Activated naive CD4-positive, alpha-beta T cell treated with anti-CD3 and anti-CD28 coated beads for 36 hours (primary cell): ENCODE measurements at regions of chr12 and their contacts with region 1.

Region 1: GRCh38 chr12:27014085-27014858 is at the start of gene TM7SF3:
- DNase-seq: peak; percentile 96
- H3K4me3 Mint-ChIP-seq: peak within 1 kb of the TSS; percentile 91
- H3K27ac Mint-ChIP-seq: peak within 1 kb of the TSS; percentile 88
- H3K4me1 Mint-ChIP-seq: peaks cover 45% of the 10 kb centered on the region
- H3K27me3 Mint-ChIP-seq: no peaks in the 10 kb centered on the region
- total RNA-seq, gene TM7SF3: 39.1 to 42.8 TPM

Region 2: GRCh38 chr12:25069224-25069623 is 1945.0 kb before region 1 on chr12:
- CTCF ChIA-PET with region 1: no interaction called
- intact Hi-C with region 1: no loop called
- DNase-seq: no peak
- H3K4me3 Mint-ChIP-seq: no peak overlapping the region
- H3K27ac Mint-ChIP-seq: no peak overlapping the region
- H3K4me1 Mint-ChIP-seq: peaks cover 27% of the 10 kb centered on the region
- H3K27me3 Mint-ChIP-seq: no peaks in the 10 kb centered on the region

Region 3: DNA sequence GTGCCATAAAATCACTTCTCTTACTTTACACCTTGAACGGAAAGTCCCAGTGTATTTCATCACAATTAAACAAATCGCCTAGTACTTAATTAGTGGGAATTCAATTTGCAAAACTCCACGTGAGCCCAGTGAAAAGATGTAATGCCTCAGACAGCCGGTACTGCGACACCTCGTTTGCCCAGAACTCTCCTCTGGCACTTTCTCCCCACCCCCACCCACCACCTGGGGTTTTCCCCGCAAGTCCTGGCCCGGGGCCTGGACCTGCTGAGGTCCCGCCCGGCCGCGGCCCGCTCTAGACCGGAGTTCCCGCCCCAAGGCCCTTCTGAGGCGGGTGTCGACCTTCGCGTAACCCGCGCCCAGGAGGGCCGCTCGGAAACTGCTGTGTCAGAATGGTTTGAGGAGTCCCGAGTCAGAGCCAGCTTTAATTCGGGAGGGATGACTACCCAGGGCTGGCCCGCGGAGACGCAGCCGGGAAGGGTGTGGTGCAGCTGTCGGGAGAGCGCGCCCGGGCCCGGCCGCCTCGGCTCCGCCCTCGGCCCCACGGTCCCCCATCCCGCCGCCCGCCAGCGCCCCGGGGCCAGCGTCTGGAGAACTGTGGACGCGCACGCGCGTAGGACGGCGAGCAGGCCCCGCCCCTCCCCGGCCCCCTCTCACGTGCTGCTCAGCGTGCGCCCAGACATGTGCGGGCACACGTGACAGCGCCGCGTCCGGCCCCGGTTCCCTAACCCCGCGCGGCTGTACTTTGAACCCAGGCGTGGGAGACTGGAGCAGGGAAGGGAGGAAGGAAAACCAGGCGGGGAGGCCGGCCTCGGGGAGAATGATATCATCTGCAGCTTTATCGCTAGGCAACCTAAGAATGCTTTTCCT is 900.2 kb before region 1 on chr12:
- CTCF ChIA-PET with region 1: interaction called, 4 read pairs
- intact Hi-C with region 1: loop called (anchors 2 kb)
- DNase-seq: peak; percentile 82
- H3K4me3 Mint-ChIP-seq: peak overlapping the region; percentile 68
- H3K27ac Mint-ChIP-seq: peak overlapping the region; percentile 22
- H3K4me1 Mint-ChIP-seq: peaks cover 6% of the 10 kb centered on the region
- H3K27me3 Mint-ChIP-seq: peaks cover 35% of the 10 kb centered on the region

Region 4: DNA sequence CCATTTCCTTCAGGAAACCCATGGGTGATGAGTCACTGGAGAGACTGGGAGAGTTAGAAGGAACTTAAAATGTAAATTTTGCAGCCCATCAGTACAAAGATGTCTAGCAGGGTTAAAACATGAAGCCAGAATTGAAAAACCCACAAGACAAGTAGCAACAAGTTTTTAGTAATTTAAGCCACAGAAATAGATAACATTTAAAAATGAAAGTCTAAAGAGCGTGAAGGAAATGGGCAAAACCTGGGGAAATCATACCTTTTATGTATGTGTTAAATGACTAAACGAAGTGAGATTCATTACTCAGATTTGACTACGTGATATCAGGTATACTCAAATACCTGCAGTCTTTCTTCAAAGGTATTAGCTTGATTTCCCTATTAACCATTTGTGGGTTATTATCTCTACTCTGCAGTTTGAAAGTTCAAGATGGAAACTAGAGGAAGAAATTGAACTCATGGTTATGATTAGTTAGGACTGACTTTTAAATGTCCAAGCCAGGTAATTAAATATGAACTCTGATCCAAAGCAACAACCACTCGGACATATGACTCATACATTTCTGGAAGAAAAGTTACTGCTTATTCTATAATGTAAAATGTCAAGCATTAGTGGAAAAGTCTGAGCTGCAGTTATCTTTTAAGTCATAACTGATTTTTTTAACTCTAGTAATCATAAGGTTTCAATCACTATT is 265.4 kb before region 1 on chr12:
- CTCF ChIA-PET with region 1: no interaction called
- intact Hi-C with region 1: loop called (anchors 1 kb)
- DNase-seq: no peak
- H3K4me3 Mint-ChIP-seq: peak overlapping the region; percentile 12
- H3K27ac Mint-ChIP-seq: peak overlapping the region; percentile 88
- H3K4me1 Mint-ChIP-seq: peaks cover 64% of the 10 kb centered on the region
- H3K27me3 Mint-ChIP-seq: no peaks in the 10 kb centered on the region

Region 5: GRCh38 chr12:26937875-26938700 is 76.2 kb before region 1 on chr12 and contains the starts of genes FGFR1OP2 and INTS13:
- CTCF ChIA-PET with region 1: interaction called, 6 read pairs
- intact Hi-C with region 1: loop called (anchors 1 kb)
- DNase-seq: peak; percentile 99
- H3K4me3 Mint-ChIP-seq: peak within 1 kb of the TSS; percentile 93
- H3K27ac Mint-ChIP-seq: peak within 1 kb of the TSS; percentile 98
- H3K4me1 Mint-ChIP-seq: peaks cover 52% of the 10 kb centered on the region
- H3K27me3 Mint-ChIP-seq: no peaks in the 10 kb centered on the region
- total RNA-seq, gene FGFR1OP2: 37.0 to 38.4 TPM
- total RNA-seq, gene INTS13: 39.6 to 42.0 TPM

Region 6: DNA sequence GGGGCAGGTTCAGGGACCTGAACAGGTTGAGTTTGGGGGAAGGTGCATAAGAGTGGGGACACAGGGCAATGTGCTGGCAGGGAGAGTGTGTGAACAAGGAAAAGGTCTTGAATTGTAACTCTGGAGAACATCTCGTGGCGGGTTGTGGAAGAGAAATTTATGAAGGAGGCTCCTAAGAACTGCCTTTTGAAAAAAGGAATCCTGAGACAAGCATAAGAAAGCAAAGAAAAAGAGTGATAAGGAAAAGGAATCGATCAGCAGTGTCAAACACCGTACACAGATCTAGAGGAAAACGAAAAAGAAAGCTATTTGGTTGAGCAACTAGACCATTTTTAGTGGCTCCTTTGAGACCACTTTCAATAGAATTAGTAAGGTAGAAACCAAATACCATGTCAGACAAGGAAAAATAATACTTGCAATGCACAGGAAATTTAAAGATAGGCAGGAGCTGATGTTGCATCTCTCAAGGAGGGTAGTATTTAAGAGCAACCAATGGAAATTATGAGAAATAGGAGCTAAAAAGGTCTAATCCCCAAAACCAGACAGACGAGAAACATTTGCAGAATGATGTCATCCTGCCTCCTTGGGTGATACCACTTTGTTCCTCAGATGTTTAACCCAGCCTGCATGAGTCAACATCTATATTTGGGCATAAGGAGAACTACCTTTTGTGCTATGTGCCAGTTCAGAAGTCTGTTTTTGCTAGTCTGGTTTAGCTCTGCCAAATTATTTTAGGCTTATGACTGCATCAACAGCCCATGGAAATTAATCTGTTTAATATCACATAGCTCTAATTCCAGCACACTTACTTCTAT is 165.3 kb after region 1 on chr12:
- CTCF ChIA-PET with region 1: interaction called, 10 read pairs
- intact Hi-C with region 1: no loop called
- DNase-seq: peak; percentile 69
- H3K4me3 Mint-ChIP-seq: no peak overlapping the region
- H3K27ac Mint-ChIP-seq: peak overlapping the region; percentile 76
- H3K4me1 Mint-ChIP-seq: peaks cover 38% of the 10 kb centered on the region
- H3K27me3 Mint-ChIP-seq: peaks cover 2% of the 10 kb centered on the region

Region 7: DNA sequence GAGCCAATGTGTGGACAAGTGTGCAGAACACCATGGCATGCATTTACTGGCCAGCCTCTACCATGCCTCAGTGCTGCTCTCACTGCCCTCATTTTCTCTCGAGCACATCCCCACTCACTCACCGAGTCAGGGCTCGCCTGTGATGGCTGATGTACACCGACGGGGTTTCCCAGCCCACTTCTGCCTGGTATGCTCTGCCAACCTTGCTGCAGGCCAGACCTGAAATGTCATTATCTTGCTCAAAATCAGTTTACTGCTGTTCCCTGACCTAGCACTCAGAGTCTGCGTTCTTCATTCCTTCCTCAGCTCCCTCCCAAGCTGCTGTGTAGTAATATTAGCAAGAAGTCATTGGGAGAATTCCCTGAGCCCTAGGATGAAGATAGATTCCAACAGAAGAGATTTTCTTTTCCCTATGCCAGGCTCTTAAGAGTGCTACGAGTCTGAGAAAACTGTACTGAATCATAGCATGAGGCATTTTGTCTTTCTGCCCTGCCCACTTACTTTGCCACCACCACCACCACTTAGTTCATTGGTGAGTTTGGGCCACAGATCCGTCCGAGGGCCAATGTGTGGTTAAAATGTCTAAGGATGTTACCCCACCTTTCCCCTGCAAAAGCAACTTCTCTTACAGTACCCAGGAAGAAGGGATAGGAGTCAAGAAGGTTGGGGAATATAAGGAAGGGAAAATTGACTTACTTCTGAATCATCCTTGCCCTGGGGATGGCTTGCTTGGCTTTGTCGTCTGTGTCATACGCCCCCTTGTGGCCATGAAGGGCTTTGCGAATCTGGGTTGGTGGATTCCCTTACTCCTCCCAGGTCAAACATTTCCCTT is 369.4 kb after region 1 on chr12:
- CTCF ChIA-PET with region 1: interaction called, 3 read pairs
- intact Hi-C with region 1: loop called (anchors 1 kb)
- DNase-seq: peak; percentile 84
- H3K4me3 Mint-ChIP-seq: no peak overlapping the region
- H3K27ac Mint-ChIP-seq: no peak overlapping the region
- H3K4me1 Mint-ChIP-seq: no peaks in the 10 kb centered on the region
- H3K27me3 Mint-ChIP-seq: peaks cover 4% of the 10 kb centered on the region